ENCODE measurements at regions of chr15 and their contacts with region 1.

Region 1: DNA sequence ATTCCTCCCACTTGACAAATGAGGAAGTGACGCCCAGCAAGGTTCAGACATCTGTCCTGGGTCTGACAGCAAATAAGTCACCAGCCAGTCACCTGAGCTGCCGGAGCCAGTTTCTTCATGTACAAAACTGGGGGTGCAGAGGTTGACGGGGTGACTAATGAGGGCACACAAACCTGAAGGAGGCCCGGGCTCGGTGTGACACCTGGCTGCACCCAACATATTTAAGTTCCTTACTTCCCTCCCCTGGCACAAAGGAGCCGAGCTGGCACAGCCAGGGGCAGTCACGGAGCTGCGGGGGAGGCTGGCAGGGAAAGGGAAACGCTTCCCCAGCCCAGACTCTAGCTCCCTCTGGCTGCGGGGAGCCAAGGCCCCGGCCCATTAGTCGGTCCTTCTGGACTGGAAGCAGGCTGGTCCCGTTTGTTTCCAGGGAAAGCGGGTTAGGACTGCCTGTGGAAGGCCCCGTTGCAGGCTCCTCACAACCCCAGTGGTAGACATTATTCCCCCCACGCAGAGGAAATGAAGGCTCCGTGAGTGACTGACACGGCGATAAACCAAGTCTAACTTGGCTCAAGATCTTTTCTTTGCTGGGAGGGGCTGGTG is 2.3 kb downstream of the FBXL22 start:
- DNase-seq: peak; percentile 81 to 86 (median 84)
- ATAC-seq: peak; percentile 58
- H3K4me3 ChIP-seq: peak overlapping the region in 1 of 2 donors; percentile 28
- H3K27ac ChIP-seq: peak overlapping the region; percentile 81 to 94 (median 92)
- H3K4me1 ChIP-seq: peaks cover 43% of the 10 kb centered on the region
- H3K27me3 ChIP-seq: no peaks in the 10 kb centered on the region
- CTCF ChIP-seq: peak; percentile 61 to 91 (median 85)
- POLR2A ChIP-seq: peak in 2 of 3 donors; percentile 49 to 61

Region 2: GRCh38 chr15:63474810-63475319 is 124.6 kb before region 1 on chr15:
- intact Hi-C with region 1: loop called (anchors 5 kb)
- DNase-seq: peak; percentile 18 to 50 (median 42)
- ATAC-seq: peak; percentile 17
- H3K4me3 ChIP-seq: no peak overlapping the region
- H3K27ac ChIP-seq: peak overlapping the region in 3 of 4 donors; percentile 47 to 71 (median 49)
- H3K4me1 ChIP-seq: peaks cover 25% of the 10 kb centered on the region
- H3K27me3 ChIP-seq: no peaks in the 10 kb centered on the region
- CTCF ChIP-seq: no peak
- POLR2A ChIP-seq: no peak